ENCODE measurements at regions of chr11 and their contacts with region 1.

Region 1: GRCh38 chr11:72585762-72586311 is 88.4 kb downstream of the PDE2A start:
- DNase-seq: peak; percentile 88
- ATAC-seq: peak; percentile 77
- H3K4me3 ChIP-seq: peak overlapping the region in 1 of 5 experiments; percentile 58
- H3K4me3 Mint-ChIP-seq: peak overlapping the region; percentile 97
- H3K27ac ChIP-seq: no peak overlapping the region
- H3K27ac Mint-ChIP-seq: peak overlapping the region; percentile 63
- H3K4me1 ChIP-seq: peaks cover 31 to 32% of the 10 kb centered on the region in 2 donors
- H3K4me1 Mint-ChIP-seq: peaks cover 37% of the 10 kb centered on the region
- H3K27me3 ChIP-seq: peaks cover 0 to 50% (median 12%) of the 10 kb centered on the region in 4 experiments
- H3K27me3 Mint-ChIP-seq: peaks cover 23% of the 10 kb centered on the region
- CTCF ChIP-seq: peak; percentile 95

Region 2: GRCh38 chr11:72483412-72484186 is 102.2 kb before region 1 on chr11:
- CTCF ChIA-PET with region 1: interaction called, 3 read pairs
- POLR2A ChIA-PET with region 1: no interaction called
- intact Hi-C with region 1: loop called (anchors 5 kb)
- DNase-seq: no peak
- ATAC-seq: no peak
- H3K4me3 ChIP-seq: no peak overlapping the region
- H3K4me3 Mint-ChIP-seq: no peak overlapping the region
- H3K27ac ChIP-seq: no peak overlapping the region
- H3K27ac Mint-ChIP-seq: no peak overlapping the region
- H3K4me1 ChIP-seq: peaks cover 0 to 6% of the 10 kb centered on the region in 2 donors
- H3K4me1 Mint-ChIP-seq: no peaks in the 10 kb centered on the region
- H3K27me3 ChIP-seq: peaks cover 0 to 20% (median 10%) of the 10 kb centered on the region in 4 experiments
- H3K27me3 Mint-ChIP-seq: peaks cover 36% of the 10 kb centered on the region
- CTCF ChIP-seq: no peak

Region 3: GRCh38 chr11:72537051-72537450 is 48.8 kb before region 1 on chr11:
- CTCF ChIA-PET with region 1: no interaction called
- POLR2A ChIA-PET with region 1: no interaction called
- intact Hi-C with region 1: no loop called
- DNase-seq: no peak
- ATAC-seq: no peak
- H3K4me3 ChIP-seq: no peak overlapping the region
- H3K4me3 Mint-ChIP-seq: no peak overlapping the region
- H3K27ac ChIP-seq: no peak overlapping the region
- H3K27ac Mint-ChIP-seq: no peak overlapping the region
- H3K4me1 ChIP-seq: no peaks in the 10 kb centered on the region
- H3K4me1 Mint-ChIP-seq: no peaks in the 10 kb centered on the region
- H3K27me3 ChIP-seq: peaks cover 0 to 37% (median 15%) of the 10 kb centered on the region in 4 experiments
- H3K27me3 Mint-ChIP-seq: peaks cover 38% of the 10 kb centered on the region
- CTCF ChIP-seq: no peak

Region 4: GRCh38 chr11:72598906-72599305 is 13.1 kb after region 1 on chr11:
- CTCF ChIA-PET with region 1: interaction called, 10 read pairs
- POLR2A ChIA-PET with region 1: no interaction called
- intact Hi-C with region 1: no loop called
- DNase-seq: no peak
- ATAC-seq: no peak
- H3K4me3 ChIP-seq: no peak overlapping the region
- H3K4me3 Mint-ChIP-seq: no peak overlapping the region
- H3K27ac ChIP-seq: no peak overlapping the region
- H3K27ac Mint-ChIP-seq: no peak overlapping the region
- H3K4me1 ChIP-seq: no peaks in the 10 kb centered on the region
- H3K4me1 Mint-ChIP-seq: no peaks in the 10 kb centered on the region
- H3K27me3 ChIP-seq: peaks cover 0 to 23% (median 0%) of the 10 kb centered on the region in 4 experiments
- H3K27me3 Mint-ChIP-seq: peaks cover 31% of the 10 kb centered on the region
- CTCF ChIP-seq: no peak

Region 5: DNA sequence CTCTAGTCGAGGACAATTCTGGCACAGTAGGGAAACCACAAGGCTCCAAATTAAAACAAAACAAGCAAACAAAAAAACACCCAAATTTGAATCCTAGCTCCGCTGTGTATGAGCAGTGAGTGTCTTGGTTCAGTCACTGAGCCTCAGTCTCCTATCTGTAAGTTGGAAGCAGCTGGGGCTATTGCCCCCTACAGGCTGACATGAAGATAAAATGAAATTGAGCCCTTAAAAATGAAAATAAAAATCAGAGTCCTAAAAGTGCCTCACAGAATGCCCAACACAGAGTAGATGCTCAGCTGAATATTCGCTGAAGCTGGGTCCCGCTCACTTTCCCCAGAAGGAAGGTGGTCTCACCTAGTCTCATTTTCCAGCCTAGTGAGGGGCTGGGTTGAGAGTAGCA is 23.2 kb after region 1 on chr11:
- CTCF ChIA-PET with region 1: interaction called, 32 read pairs
- POLR2A ChIA-PET with region 1: no interaction called
- intact Hi-C with region 1: loop called (anchors 1 kb)
- DNase-seq: no peak
- ATAC-seq: no peak
- H3K4me3 ChIP-seq: no peak overlapping the region
- H3K4me3 Mint-ChIP-seq: no peak overlapping the region
- H3K27ac ChIP-seq: no peak overlapping the region
- H3K27ac Mint-ChIP-seq: no peak overlapping the region
- H3K4me1 ChIP-seq: peaks cover 11 to 14% of the 10 kb centered on the region in 2 donors
- H3K4me1 Mint-ChIP-seq: peaks cover 15% of the 10 kb centered on the region
- H3K27me3 ChIP-seq: peaks cover 0 to 50% (median 10%) of the 10 kb centered on the region in 4 experiments
- H3K27me3 Mint-ChIP-seq: peaks cover 33% of the 10 kb centered on the region
- CTCF ChIP-seq: peak; percentile 70

Region 6: GRCh38 chr11:72642884-72643511 is 57.2 kb after region 1 on chr11:
- CTCF ChIA-PET with region 1: interaction called, 152 read pairs
- POLR2A ChIA-PET with region 1: no interaction called
- intact Hi-C with region 1: loop called (anchors 1 kb)
- DNase-seq: peak; percentile 87
- ATAC-seq: peak; percentile 82
- H3K4me3 ChIP-seq: peak overlapping the region in 4 of 5 experiments; percentile 27 to 54 (median 36)
- H3K4me3 Mint-ChIP-seq: peak overlapping the region; percentile 79
- H3K27ac ChIP-seq: no peak overlapping the region
- H3K27ac Mint-ChIP-seq: peak overlapping the region; percentile 4
- H3K4me1 ChIP-seq: peaks cover 13 to 16% of the 10 kb centered on the region in 2 donors
- H3K4me1 Mint-ChIP-seq: peaks cover 4% of the 10 kb centered on the region
- H3K27me3 ChIP-seq: peaks cover 0 to 51% (median 22%) of the 10 kb centered on the region in 4 experiments
- H3K27me3 Mint-ChIP-seq: peaks cover 14% of the 10 kb centered on the region
- CTCF ChIP-seq: peak; percentile 99